ENCODE measurements at regions of chrX and their contacts with region 1.

Region 1: DNA sequence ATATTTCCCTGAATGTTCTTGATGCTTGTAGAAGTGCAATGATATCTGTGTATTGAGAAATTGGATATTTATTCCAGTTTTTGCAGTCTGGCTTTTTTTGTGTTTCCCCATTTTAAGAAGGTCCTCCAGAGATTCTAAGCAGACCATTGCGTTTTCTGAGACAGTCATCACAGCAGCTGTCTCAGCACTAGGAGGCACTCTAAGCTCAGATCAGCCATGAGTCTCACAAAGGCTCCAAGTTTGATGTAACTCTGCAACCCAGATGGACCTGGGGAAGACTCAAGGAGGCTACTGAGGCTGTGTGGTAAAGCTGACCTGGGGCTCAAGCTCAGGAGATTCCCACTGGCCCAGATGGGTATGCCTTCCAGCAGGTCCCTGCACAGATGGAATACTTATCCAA is 89.3 kb upstream of the CYLC1 start:
- DNase-seq: peak; percentile 13
- ATAC-seq: peak; percentile 69
- H3K4me3 ChIP-seq: no peak overlapping the region
- H3K27ac ChIP-seq: no peak overlapping the region
- H3K4me1 ChIP-seq: no peaks in the 10 kb centered on the region
- H3K27me3 ChIP-seq: no peaks in the 10 kb centered on the region
- CTCF ChIP-seq: peak; percentile 40

Region 2: GRCh38 chrX:83934220-83934619 is 162.6 kb after region 1 on chrX:
- CTCF ChIA-PET with region 1: no interaction called
- POLR2A ChIA-PET with region 1: no interaction called
- intact Hi-C with region 1: loop called (anchors 1 kb)
- DNase-seq: peak; percentile 42
- ATAC-seq: peak; percentile 74
- H3K4me3 ChIP-seq: no peak overlapping the region
- H3K27ac ChIP-seq: no peak overlapping the region
- H3K4me1 ChIP-seq: no peaks in the 10 kb centered on the region
- H3K27me3 ChIP-seq: no peaks in the 10 kb centered on the region
- CTCF ChIP-seq: peak; percentile 52; the same call in 1 of the 2 replicates